Mammary epithelial cell (primary cell): ENCODE measurements at regions of chr17 and their contacts with region 1.

Region 1: DNA sequence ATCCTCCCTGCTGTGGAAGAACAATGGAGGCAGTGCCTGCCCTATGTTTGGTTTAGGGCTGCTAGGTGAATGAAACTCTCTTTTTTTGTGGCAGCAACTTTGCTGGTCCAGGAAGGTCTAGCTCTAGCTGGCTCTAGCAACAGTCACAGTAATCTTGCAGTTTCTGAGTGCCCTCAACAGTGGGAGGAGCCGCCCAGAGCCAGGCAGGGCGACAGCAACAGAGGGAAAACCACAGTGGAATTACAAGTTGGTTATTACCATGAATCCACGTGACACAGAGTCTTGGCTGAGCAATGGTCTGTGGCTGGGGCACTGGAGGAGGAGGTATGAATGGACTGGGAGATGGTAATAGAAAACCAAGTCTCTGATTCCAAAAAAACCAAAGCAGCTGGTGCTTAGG is 10.3 kb downstream of the HSPB9 start:
- DNase-seq: peak; percentile 83
- H3K4me3 ChIP-seq: no peak overlapping the region
- H3K27ac ChIP-seq: no peak overlapping the region
- H3K4me1 ChIP-seq: peaks cover 20% of the 10 kb centered on the region
- H3K27me3 ChIP-seq: no peaks in the 10 kb centered on the region
- CTCF ChIP-seq: no peak

Region 2: GRCh38 chr17:42094375-42095069 is 38.4 kb before region 1 on chr17:
- CTCF ChIA-PET with region 1: no interaction called
- dilution Hi-C with region 1: loop called (anchors 5 kb)
- in situ Hi-C with region 1: no loop called
- intact Hi-C with region 1: no loop called
- DNase-seq: no peak
- H3K4me3 ChIP-seq: no peak overlapping the region
- H3K27ac ChIP-seq: no peak overlapping the region
- H3K4me1 ChIP-seq: no peaks in the 10 kb centered on the region
- H3K27me3 ChIP-seq: peaks cover 5% of the 10 kb centered on the region
- CTCF ChIP-seq: no peak

Region 3: GRCh38 chr17:42183741-42184711 is 51.1 kb after region 1 on chr17:
- CTCF ChIA-PET with region 1: no interaction called
- dilution Hi-C with region 1: no loop called
- in situ Hi-C with region 1: no loop called
- intact Hi-C with region 1: loop called (anchors 5 kb)
- DNase-seq: peak; percentile 12
- H3K4me3 ChIP-seq: peak overlapping the region in 2 of 3 experiments; percentile 35 to 39
- H3K27ac ChIP-seq: no peak overlapping the region
- H3K4me1 ChIP-seq: peaks cover 21% of the 10 kb centered on the region
- H3K27me3 ChIP-seq: peaks cover 12% of the 10 kb centered on the region
- CTCF ChIP-seq: peak; percentile 39 to 47